ENCODE measurements at regions of chr7 and their contacts with region 1.

Region 1: GRCh38 chr7:85041605-85042216 is 145.1 kb downstream of the SEMA3D start:
- DNase-seq: peak; percentile 69
- H3K4me3 Mint-ChIP-seq: no peak overlapping the region
- H3K27ac Mint-ChIP-seq: no peak overlapping the region
- H3K4me1 Mint-ChIP-seq: no peaks in the 10 kb centered on the region
- H3K27me3 Mint-ChIP-seq: no peaks in the 10 kb centered on the region
- CTCF ChIP-seq: no peak

Region 2: GRCh38 chr7:84490661-84491060 is 551.0 kb before region 1 on chr7:
- CTCF ChIA-PET with region 1: no interaction called
- intact Hi-C with region 1: no loop called
- DNase-seq: no peak
- H3K4me3 Mint-ChIP-seq: no peak overlapping the region
- H3K27ac Mint-ChIP-seq: no peak overlapping the region
- H3K4me1 Mint-ChIP-seq: no peaks in the 10 kb centered on the region
- H3K27me3 Mint-ChIP-seq: no peaks in the 10 kb centered on the region
- CTCF ChIP-seq: no peak

Region 3: GRCh38 chr7:85464042-85464651 is 422.4 kb after region 1 on chr7:
- CTCF ChIA-PET with region 1: interaction called, 10 read pairs
- intact Hi-C with region 1: loop called (anchors 5 kb)
- DNase-seq: no peak
- H3K4me3 Mint-ChIP-seq: no peak overlapping the region
- H3K27ac Mint-ChIP-seq: no peak overlapping the region
- H3K4me1 Mint-ChIP-seq: peaks cover 14% of the 10 kb centered on the region
- H3K27me3 Mint-ChIP-seq: no peaks in the 10 kb centered on the region
- CTCF ChIP-seq: no peak

Region 4: GRCh38 chr7:85554236-85555178 is 512.8 kb after region 1 on chr7:
- CTCF ChIA-PET with region 1: no interaction called
- intact Hi-C with region 1: loop called (anchors 5 kb)
- DNase-seq: peak; percentile 34
- H3K4me3 Mint-ChIP-seq: no peak overlapping the region
- H3K27ac Mint-ChIP-seq: peak overlapping the region; percentile 36
- H3K4me1 Mint-ChIP-seq: peaks cover 23% of the 10 kb centered on the region
- H3K27me3 Mint-ChIP-seq: no peaks in the 10 kb centered on the region
- CTCF ChIP-seq: no peak

Region 5: GRCh38 chr7:85829817-85830432 is 788.2 kb after region 1 on chr7:
- CTCF ChIA-PET with region 1: interaction called, 11 read pairs
- intact Hi-C with region 1: loop called (anchors 2 kb)
- DNase-seq: no peak
- H3K4me3 Mint-ChIP-seq: no peak overlapping the region
- H3K27ac Mint-ChIP-seq: no peak overlapping the region
- H3K4me1 Mint-ChIP-seq: no peaks in the 10 kb centered on the region
- H3K27me3 Mint-ChIP-seq: no peaks in the 10 kb centered on the region
- CTCF ChIP-seq: no peak

Measured in Calu3 (cell line).